A549 (cell line): ENCODE measurements at regions of chr12 and their contacts with region 1.

Region 1: DNA sequence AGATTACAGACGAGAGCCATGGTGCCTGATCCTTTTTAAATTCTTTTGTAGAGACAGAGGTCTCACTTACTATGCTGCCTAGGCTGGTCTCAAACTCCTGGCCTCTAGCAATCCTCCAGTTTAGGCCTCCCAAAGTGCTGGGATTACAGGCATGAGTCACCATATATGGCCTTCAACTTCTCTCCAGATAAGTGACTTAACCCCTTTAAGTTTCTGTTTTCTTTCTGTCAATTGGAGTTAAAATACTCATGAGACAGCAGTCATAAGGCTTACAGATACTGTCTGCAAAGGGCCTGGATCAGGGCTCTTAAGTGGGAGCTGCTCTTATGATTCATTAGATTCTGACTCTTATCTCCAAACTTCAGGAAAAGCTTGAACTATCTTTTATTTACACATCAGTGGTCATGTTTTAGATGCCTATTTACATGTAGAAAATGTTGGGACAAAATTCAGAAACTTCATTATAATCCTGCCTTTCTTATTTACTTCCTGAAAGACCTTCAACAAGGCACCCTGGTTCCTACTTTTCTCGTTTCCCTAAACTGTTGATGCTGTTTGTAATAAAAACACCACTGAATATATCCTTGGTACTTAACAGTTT is 271.5 kb upstream of the TBX3 start:
- DNase-seq: peak in 1 of 2 experiments; percentile 21
- ATAC-seq: peak in 1 of 2 experiments; percentile 43; a peak in 2 of 6 replicates
- H3K4me3 ChIP-seq: no peak overlapping the region
- H3K27ac ChIP-seq: peak overlapping the region in 1 of 2 experiments; percentile 53; a peak in 2 of 6 replicates
- H3K4me1 ChIP-seq: peaks cover 10% of the 10 kb centered on the region
- CTCF ChIP-seq: no peak
- EP300 ChIP-seq: no peak
- POLR2A ChIP-seq: no peak
- RAD21 ChIP-seq: no peak

Region 2: GRCh38 chr12:114982760-114983159 is 27.2 kb after region 1 on chr12:
- CTCF ChIA-PET with region 1: no interaction called
- POLR2A ChIA-PET with region 1: no interaction called
- DNase-seq: peak in 1 of 2 experiments; percentile 45
- ATAC-seq: peak; percentile 39 to 84; a peak in 3 of 6 replicates
- H3K4me3 ChIP-seq: no peak overlapping the region
- H3K27ac ChIP-seq: no peak overlapping the region
- H3K4me1 ChIP-seq: peaks cover under 1% of the 10 kb centered on the region; the same call in 2 of the 3 replicates
- CTCF ChIP-seq: no peak
- EP300 ChIP-seq: no peak
- POLR2A ChIP-seq: no peak
- RAD21 ChIP-seq: no peak

Region 3: GRCh38 chr12:115232455-115233156 is 277.1 kb after region 1 on chr12:
- CTCF ChIA-PET with region 1: no interaction called
- POLR2A ChIA-PET with region 1: interaction called, 11 read pairs
- DNase-seq: no peak
- ATAC-seq: no peak
- H3K4me3 ChIP-seq: no peak overlapping the region
- H3K27ac ChIP-seq: no peak overlapping the region
- H3K4me1 ChIP-seq: peaks cover 7% of the 10 kb centered on the region
- CTCF ChIP-seq: no peak
- EP300 ChIP-seq: no peak
- POLR2A ChIP-seq: no peak
- RAD21 ChIP-seq: no peak